Activated naive CD4-positive, alpha-beta T cell treated with anti-CD3 and anti-CD28 coated beads for 36 hours (primary cell): ENCODE measurements at regions of chr6 and their contacts with region 1.

Region 1: DNA sequence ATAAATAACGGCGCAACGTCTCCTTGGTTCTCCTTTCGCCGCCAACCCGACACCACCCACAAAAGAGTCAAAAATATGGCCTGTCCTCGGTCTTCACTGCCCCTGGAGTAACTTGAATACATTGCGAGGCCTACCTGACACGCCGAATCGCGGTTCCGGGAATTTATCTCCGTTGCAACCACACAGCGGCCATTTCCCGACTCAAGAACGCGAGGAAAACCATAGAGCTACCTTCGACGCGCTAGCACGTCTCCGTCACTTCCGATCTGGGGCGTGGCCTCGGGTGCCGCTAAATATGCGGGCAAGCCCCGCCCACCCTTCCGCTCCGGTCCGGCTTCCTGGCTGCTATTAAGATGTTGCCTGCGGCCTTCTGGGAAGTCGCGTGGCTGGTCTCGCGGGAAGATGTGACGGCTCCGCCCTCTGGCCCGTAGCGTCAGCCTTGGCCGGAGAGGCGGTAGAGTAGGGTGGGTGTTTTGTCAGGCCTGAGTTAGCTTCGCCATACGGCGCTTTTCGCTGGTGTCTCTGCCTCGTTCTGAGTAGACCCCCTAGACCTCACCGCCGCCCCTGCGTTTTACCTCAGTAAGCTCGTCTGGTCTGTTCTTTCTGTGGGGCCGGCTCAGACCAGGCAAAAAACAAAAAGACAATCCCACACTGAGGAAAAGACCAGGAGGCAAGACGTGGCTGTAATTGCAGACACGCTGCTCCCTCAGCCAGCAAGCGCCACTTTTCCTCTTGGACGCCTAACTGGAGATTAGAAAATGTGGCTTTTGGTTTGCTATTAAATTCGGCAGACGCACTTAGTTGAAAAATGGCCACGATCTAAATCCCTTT is at the start of gene BCLAF1:
- DNase-seq: peak; percentile 99
- H3K4me3 Mint-ChIP-seq: peak within 1 kb of the TSS; percentile 97
- H3K27ac Mint-ChIP-seq: peak within 1 kb of the TSS; percentile 100
- H3K4me1 Mint-ChIP-seq: peaks cover 44% of the 10 kb centered on the region
- H3K27me3 Mint-ChIP-seq: no peaks in the 10 kb centered on the region
- total RNA-seq, gene BCLAF1: 108 to 117 TPM

Region 2: GRCh38 chr6:134784336-134784735 is 1505.5 kb before region 1 on chr6:
- CTCF ChIA-PET with region 1: no interaction called
- intact Hi-C with region 1: no loop called
- DNase-seq: no peak
- H3K4me3 Mint-ChIP-seq: no peak overlapping the region
- H3K27ac Mint-ChIP-seq: no peak overlapping the region
- H3K4me1 Mint-ChIP-seq: no peaks in the 10 kb centered on the region
- H3K27me3 Mint-ChIP-seq: no peaks in the 10 kb centered on the region

Region 3: GRCh38 chr6:135497412-135498269 is 792.2 kb before region 1 on chr6 and contains the start of gene AHI1:
- CTCF ChIA-PET with region 1: no interaction called
- intact Hi-C with region 1: loop called (anchors 1 kb)
- DNase-seq: peak; percentile 85
- H3K4me3 Mint-ChIP-seq: no peak within 1 kb of the TSS
- H3K27ac Mint-ChIP-seq: no peak within 1 kb of the TSS
- H3K4me1 Mint-ChIP-seq: peaks cover 16% of the 10 kb centered on the region
- H3K27me3 Mint-ChIP-seq: no peaks in the 10 kb centered on the region
- total RNA-seq, gene AHI1: 17.8 to 18.8 TPM

Region 4: DNA sequence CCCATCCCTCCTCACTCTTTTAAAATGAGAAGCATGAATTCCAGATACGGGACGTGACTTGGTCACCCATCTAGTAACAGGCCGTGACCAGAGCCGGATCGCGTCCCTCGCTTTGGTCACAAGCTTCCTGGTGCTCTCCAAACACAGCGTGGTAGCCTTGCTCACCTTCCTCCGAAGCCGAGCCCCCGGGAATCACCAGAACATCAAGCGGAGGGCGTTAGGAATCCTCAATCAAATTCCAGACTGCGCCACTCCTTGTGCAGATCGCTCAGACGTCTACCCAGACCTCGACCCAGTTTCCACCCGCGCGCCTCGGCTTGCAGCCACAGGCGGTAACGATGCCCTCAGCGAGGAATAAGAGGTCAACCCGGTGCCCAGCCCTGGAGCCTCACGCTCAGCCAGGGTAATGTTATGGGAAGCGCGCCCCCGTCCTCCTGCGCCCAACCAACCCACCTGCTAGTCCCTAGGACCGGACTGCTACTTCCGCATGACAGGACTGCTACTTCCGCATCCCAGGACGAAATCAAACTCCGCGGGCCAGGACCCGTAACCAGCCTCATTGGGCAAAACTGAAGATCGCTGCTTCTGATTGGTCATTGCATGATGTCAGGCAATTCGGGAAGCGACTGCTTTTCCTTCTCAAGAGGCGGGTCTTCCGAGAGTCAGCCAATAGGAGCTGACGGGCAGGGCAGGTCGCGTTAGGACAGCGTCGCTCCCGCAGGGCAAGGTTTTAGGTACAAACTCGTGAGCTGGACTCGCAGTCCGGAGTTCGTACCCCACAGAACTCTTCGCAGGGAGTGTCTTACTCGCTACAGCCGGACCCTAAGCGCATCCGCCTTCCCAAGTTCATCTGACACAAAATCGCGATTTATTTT is 39.7 kb before region 1 on chr6 and contains the start of gene MTFR2:
- CTCF ChIA-PET with region 1: interaction called, 7 read pairs
- intact Hi-C with region 1: loop called (anchors 1 kb)
- DNase-seq: peak; percentile 97
- H3K4me3 Mint-ChIP-seq: peak within 1 kb of the TSS; percentile 95
- H3K27ac Mint-ChIP-seq: peak within 1 kb of the TSS; percentile 85
- H3K4me1 Mint-ChIP-seq: peaks cover 45% of the 10 kb centered on the region
- H3K27me3 Mint-ChIP-seq: no peaks in the 10 kb centered on the region
- total RNA-seq, gene MTFR2: 19.2 to 22.1 TPM

Region 5: DNA sequence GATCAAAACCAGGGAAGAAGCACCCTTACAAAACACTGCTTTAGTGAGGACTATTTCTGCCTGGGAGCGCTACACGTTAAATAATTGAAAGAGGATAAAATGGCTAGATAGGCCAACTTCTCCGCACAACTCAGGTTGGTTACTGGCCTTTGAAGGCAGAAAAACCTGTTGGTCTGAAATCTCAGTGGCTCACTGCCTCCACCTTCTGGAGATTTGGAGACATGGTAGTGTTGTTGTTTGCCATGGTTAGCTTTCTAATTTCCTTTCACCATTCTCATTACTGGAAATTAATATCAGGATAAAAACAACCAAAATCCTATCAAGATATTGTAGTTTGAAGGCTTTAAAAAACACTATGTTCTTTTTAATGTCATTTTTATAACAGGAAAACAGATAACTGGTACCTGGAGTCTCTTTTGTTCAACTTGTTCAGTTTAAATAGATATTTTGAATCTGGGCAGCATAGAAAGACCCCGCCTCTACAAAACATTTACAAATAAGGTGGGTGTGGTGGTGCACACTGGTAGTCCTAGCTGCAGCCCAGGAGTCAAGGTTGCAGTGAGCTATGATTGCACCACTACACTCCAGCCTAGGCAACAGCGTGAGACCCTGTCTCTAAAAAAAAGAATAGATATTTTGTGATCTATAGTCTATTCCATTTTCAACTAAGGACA is 27.4 kb after region 1 on chr6:
- CTCF ChIA-PET with region 1: interaction called, 4 read pairs
- intact Hi-C with region 1: loop called (anchors 1 kb)
- DNase-seq: peak; percentile 77
- H3K4me3 Mint-ChIP-seq: no peak overlapping the region
- H3K27ac Mint-ChIP-seq: no peak overlapping the region
- H3K4me1 Mint-ChIP-seq: no peaks in the 10 kb centered on the region
- H3K27me3 Mint-ChIP-seq: no peaks in the 10 kb centered on the region

Region 6: DNA sequence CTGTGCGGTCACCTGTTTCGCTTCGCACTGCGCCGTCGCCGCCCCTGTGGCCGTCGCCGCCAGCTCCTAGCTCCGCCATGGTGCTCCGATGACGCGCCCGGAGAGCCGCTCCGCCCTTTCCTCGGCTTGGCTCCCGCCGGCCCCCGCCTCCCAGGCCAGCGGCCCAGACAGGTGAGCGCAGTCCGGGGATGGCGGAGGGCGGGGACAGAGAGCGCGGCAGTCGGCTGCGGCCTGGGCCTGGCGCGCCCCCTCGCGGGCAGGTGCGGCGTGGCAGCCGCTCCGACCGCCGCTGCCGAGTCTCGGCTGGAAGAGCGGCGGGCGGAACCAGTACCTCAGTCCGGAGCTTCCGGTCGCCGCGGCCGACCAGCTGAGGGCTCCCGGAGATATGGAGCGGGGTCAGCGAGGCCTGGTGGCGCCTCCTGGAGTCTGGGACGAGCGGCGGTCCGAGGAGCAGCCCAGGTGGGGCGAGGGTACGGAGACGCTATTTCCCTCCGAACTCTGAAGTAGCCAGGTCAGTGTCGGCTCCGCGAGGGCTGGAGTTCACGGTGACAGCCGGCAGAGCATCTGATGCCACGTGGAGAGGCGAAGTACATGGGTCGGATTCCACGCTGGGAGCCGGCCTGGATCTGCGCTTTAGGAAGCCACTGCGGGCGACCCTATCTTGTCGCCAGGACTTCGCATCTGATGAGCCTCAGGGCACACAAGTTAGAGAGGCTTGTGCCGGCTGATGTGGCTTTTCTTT is 260.7 kb after region 1 on chr6 and contains the start of gene MAP7:
- CTCF ChIA-PET with region 1: interaction called, 3 read pairs
- intact Hi-C with region 1: loop called (anchors 2 kb)
- DNase-seq: peak; percentile 76
- H3K4me3 Mint-ChIP-seq: peak within 1 kb of the TSS; percentile 54
- H3K27ac Mint-ChIP-seq: no peak within 1 kb of the TSS
- H3K4me1 Mint-ChIP-seq: peaks cover 4% of the 10 kb centered on the region
- H3K27me3 Mint-ChIP-seq: peaks cover 38% of the 10 kb centered on the region
- total RNA-seq, gene MAP7: 1.1 to 1.3 TPM

Region 7: DNA sequence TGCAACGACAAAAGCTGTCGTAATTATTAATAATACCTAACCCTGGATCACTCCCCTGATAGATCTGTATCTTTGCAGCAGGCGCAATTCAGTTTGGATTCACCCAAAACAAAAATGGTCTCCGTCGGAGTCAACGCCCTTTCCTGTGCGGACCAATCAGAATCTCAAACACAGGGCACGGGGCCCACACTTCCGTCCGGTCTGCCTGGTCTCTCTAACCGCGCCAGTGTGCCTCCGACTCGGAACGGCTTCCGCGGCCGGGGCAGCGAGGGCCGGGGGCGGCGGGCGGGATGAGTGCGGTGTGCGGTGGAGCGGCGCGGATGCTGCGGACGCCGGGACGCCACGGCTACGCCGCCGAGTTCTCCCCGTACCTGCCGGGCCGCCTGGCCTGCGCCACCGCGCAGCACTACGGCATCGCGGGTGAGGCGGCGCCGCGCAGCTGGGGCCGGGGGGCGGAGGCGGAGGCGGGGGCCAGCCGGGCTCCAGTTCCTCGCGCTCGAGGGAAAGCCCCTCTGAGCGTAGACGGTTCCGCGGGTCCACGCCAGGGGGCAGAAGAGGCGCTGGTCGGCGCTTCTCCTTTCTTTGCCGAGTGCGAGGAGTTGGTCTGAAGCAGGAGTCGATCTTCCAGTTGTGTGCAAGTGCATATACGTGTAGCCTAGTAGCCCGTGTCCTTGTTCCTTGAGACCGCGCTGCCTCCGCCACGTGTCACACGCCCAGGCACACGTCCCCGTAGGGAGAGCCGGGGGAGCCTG is 532.8 kb after region 1 on chr6 and contains the start of gene PEX7:
- CTCF ChIA-PET with region 1: no interaction called
- intact Hi-C with region 1: loop called (anchors 1 kb)
- DNase-seq: peak; percentile 92
- H3K4me3 Mint-ChIP-seq: peak within 1 kb of the TSS; percentile 90
- H3K27ac Mint-ChIP-seq: peak within 1 kb of the TSS; percentile 92
- H3K4me1 Mint-ChIP-seq: peaks cover 19% of the 10 kb centered on the region
- H3K27me3 Mint-ChIP-seq: no peaks in the 10 kb centered on the region
- total RNA-seq, gene PEX7: 6.0 to 6.4 TPM